Activated naive CD4-positive, alpha-beta T cell treated with anti-CD3 and anti-CD28 coated beads for 36 hours (primary cell): ENCODE measurements at regions of chr13 and their contacts with region 1.

Region 1: DNA sequence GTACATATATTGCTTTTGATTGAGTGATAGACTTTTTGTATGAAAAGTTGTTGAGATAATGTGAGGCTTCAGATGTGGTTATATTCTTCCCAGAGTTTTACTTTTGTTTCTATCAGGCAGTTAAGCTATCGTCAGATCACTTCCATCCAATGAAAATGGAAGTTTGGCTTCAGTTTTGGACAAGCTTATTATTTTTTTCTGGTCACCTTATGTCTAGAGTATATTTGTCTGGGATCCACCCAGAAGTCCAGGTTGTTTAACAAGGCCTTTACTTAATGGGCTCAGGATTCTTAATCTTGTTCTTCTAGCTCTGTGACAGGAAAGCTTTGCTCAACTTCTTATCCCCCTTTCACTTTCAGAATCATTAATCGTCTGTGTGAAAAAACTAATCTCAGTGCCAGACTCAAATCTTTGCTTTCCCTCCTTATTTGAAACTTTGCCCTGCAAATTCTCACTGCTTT is 150.9 kb downstream of the PDS5B start:
- DNase-seq: no peak
- H3K4me3 Mint-ChIP-seq: peak overlapping the region; percentile 71
- H3K27ac Mint-ChIP-seq: peak overlapping the region; percentile 81
- H3K4me1 Mint-ChIP-seq: peaks cover 42% of the 10 kb centered on the region
- H3K27me3 Mint-ChIP-seq: no peaks in the 10 kb centered on the region

Region 2: DNA sequence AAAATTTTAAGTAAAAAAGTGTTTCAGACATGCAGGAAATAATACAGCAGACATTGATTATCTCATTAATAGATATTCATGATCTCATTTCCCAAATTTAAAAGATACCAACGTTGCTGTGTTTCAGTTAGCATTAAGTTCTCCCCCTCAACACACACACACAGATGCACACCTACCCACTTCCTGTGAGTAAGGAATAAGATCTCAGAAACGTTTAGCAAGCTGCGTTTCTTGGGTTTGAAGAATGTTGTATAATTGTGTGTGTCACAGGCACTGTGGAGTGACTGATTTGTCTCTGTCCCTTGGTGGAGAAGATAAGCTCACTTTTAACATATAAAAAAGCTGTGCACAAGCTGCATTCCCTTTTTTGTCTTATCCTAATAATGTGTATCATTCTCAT is 45.9 kb after region 1 on chr13:
- CTCF ChIA-PET with region 1: no interaction called
- intact Hi-C with region 1: loop called (anchors 2 kb)
- DNase-seq: peak; percentile 42
- H3K4me3 Mint-ChIP-seq: no peak overlapping the region
- H3K27ac Mint-ChIP-seq: peak overlapping the region; percentile 15
- H3K4me1 Mint-ChIP-seq: peaks cover 15% of the 10 kb centered on the region
- H3K27me3 Mint-ChIP-seq: no peaks in the 10 kb centered on the region

Region 3: DNA sequence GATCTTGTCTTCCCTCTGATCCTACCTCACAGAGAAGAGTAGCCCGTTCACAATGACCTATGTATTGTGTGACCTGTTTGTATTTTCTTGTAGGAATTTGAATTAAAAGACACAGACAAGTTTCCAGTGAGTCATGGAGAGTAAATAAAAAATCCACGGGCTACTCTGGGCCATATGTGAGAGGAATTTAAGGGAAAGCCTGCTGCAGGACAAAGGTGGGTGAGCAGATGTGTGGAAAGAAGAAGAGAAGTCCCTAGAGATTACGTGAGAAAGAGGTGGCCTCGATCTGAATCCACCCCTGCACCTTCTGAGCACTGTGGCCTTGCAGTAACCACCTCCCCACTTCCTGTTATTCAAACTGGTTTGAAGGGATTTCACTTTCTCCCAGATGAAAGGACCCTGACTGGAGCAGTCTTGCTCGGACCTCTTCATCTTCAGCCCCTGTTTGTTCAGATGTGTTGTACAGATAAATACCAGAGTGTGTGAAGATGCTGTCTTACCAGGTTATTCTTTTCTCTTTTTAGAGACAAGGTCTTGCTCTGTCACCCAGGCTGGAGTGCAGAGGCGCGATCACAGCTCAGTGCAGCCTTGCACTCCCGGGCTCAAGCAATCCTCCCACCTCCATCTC is 54.5 kb after region 1 on chr13:
- CTCF ChIA-PET with region 1: no interaction called
- intact Hi-C with region 1: loop called (anchors 1 kb)
- DNase-seq: peak; percentile 61
- H3K4me3 Mint-ChIP-seq: no peak overlapping the region
- H3K27ac Mint-ChIP-seq: peak overlapping the region; percentile 71
- H3K4me1 Mint-ChIP-seq: peaks cover 34% of the 10 kb centered on the region
- H3K27me3 Mint-ChIP-seq: no peaks in the 10 kb centered on the region

Region 4: GRCh38 chr13:33642374-33643068 is 905.4 kb after region 1 on chr13:
- CTCF ChIA-PET with region 1: no interaction called
- intact Hi-C with region 1: no loop called
- DNase-seq: no peak
- H3K4me3 Mint-ChIP-seq: no peak overlapping the region
- H3K27ac Mint-ChIP-seq: no peak overlapping the region
- H3K4me1 Mint-ChIP-seq: peaks cover 47% of the 10 kb centered on the region
- H3K27me3 Mint-ChIP-seq: no peaks in the 10 kb centered on the region